ENCODE measurements at regions of chr6 and their contacts with region 1.

Region 1: DNA sequence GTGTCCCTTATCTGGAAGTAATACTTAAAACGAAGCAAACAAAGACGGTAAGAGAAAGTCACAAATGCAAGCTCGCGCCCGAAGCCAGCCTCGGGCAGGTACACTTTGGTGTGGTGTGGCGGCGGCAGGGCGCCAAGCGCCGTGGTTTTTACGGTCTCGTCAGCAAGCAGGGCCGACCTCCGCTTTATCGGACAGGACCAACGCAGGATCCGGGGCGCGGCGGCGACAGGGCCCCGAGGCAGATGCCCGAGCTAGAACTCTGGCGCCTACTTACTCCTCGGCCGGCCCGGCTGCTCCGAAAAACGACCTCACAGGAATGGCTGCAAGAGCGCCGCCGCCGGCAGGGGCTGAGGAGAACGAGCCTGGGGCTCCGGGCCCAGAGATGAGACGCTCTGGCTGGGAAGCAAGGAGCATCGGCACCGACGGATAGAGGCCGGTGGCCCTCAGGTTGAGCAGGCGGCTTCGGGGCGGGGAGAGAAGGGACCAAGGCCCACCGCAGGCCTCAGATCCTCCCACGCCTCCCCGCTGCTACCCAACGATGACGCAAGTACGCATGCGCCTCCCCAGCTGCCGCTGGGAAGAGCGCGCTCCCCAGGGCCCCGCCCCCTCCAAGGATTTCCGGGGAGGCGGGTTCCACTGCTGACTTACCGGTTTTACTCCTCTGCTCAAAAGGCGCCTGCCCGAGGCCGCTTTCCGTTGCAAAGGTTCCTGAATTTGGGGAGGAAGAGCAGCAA is 60.6 kb downstream of the FAM217A start:
- DNase-seq: peak; percentile 95 to 97
- H3K4me3 ChIP-seq: peak overlapping the region; percentile 74
- H3K4me1 ChIP-seq: peaks cover 22% of the 10 kb centered on the region
- H3K27me3 ChIP-seq: no peaks in the 10 kb centered on the region

Region 2: DNA sequence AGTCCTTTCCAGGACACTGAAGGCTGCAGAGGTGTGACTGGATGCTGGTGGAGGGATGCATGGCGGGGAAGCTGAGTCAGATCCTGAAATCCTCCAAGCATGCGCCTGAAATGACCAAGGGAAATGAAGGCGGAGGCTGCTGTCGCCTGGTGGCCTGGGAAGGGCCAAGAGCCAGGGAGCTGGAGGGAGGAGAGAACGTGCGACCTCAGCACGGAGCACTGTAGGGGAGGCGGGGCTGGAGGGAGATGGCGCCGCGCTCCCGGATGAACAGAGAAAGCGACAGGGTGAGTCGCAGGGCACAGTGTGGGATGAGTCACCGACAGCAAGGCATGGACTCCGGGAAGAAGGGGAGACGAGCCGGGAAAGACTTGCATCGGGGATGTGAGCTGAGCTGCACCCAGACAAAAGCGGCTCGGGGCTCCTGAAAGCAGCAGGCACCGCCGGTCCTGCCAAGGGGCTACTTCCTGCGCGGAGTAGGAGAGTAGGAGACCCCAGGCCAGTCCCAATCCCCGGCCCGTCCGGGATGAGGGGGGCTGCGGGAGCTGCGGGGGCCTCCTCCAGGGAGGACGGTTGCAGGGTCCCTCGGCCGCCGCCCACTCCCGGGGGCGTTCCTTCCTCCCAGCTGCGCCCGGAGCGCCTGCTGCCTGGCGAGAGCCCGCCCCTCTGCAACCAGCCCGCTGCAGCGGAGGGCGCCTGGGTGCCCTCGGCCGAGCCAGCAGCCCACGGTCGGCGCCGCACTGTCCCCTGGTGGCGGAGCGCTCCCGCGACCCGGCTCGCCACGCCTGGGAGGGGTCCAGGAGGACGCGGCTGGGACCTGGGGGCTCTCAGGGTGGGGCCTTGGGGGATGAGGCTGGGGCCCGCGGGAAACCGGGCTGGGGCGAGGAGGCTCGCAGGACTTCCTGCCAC is 1029.7 kb before region 1 on chr6:
- in situ Hi-C with region 1: loop called (anchors 25 kb)
- DNase-seq: peak; percentile 78 to 91
- H3K4me3 ChIP-seq: peak overlapping the region; percentile 56
- H3K4me1 ChIP-seq: peaks cover 21% of the 10 kb centered on the region
- H3K27me3 ChIP-seq: no peaks in the 10 kb centered on the region

Measured in HAP-1 (cell line).